Psoas muscle (tissue), 8 donors: ENCODE measurements at regions of chr2 and their contacts with region 1.

Region 1: DNA sequence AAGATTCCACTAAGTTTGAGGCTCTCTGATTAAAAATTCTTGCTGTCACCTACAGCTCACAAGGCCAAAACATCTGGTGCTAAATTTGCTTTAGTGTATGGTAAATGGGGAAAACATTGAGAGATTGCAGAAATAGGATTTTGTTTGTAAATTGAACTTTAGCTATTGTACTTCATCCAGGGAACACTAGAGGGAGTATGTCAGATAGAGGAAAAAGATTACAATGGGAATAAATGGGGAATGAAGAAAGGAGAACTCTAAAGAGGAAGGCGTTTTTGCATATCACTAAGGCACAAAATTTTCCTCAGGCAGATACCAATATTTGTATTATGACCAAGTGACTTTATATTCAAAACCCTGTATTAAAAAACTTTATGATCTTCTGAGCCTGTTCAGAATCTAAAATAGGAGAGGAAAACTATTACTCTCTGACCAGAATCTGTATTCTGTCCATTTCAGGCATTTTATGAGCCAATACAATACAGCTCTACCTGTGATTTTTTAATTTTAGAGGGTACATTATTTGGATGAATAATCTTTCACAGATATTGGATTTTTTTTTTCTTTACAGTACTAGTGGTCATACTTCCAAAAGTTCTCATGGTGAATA is 52.3 kb upstream of the ITGB6 start:
- DNase-seq: no peak
- ATAC-seq: peak; percentile 40 to 75 (median 57)
- H3K4me3 ChIP-seq: peak overlapping the region; percentile 69
- H3K27ac ChIP-seq: peak overlapping the region; percentile 85
- H3K4me1 ChIP-seq: peaks cover 39% of the 10 kb centered on the region
- H3K27me3 ChIP-seq: no peaks in the 10 kb centered on the region
- CTCF ChIP-seq: peak; percentile 85

Region 2: DNA sequence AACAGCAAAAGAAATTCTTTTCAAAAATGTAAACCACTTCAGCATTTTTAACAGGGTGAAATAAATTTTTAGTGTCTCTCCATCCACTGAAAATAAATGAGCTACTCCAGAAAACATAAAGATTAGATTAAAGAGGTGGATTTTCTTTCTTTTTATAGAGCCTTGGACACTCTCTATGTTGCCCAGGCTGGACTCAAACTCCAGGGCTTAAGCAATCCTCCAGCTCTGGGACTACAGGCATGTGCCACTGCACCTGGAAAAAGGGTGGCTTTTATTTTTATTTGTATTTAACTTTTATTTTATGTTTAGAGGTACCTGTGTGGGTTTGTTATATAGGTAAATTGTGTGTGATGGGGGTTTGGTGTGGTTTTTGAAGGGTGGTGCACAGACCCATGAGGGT is 72.2 kb before region 1 on chr2:
- intact Hi-C with region 1: no loop called
- DNase-seq: no peak
- ATAC-seq: no peak
- H3K4me3 ChIP-seq: no peak overlapping the region
- H3K27ac ChIP-seq: no peak overlapping the region
- H3K4me1 ChIP-seq: peaks cover 10% of the 10 kb centered on the region
- H3K27me3 ChIP-seq: no peaks in the 10 kb centered on the region
- CTCF ChIP-seq: no peak

Region 3: GRCh38 chr2:160210599-160211138 is 41.7 kb before region 1 on chr2:
- intact Hi-C with region 1: loop called (anchors 2 to 5 kb)
- DNase-seq: peak; percentile 70 to 80
- ATAC-seq: peak; percentile 46 to 63 (median 56)
- H3K4me3 ChIP-seq: no peak overlapping the region
- H3K27ac ChIP-seq: peak overlapping the region; percentile 85
- H3K4me1 ChIP-seq: peaks cover 65% of the 10 kb centered on the region
- H3K27me3 ChIP-seq: no peaks in the 10 kb centered on the region
- CTCF ChIP-seq: peak; percentile 74

Region 4: GRCh38 chr2:160358046-160358445 is 105.7 kb after region 1 on chr2:
- intact Hi-C with region 1: no loop called
- DNase-seq: no peak
- ATAC-seq: peak in 1 of 4 donors; percentile 24
- H3K4me3 ChIP-seq: no peak overlapping the region
- H3K27ac ChIP-seq: no peak overlapping the region
- H3K4me1 ChIP-seq: peaks cover 46% of the 10 kb centered on the region
- H3K27me3 ChIP-seq: no peaks in the 10 kb centered on the region
- CTCF ChIP-seq: no peak